Prostate gland (tissue), 2 donors: ENCODE measurements at regions of chr13 and their contacts with region 1.

Region 1: DNA sequence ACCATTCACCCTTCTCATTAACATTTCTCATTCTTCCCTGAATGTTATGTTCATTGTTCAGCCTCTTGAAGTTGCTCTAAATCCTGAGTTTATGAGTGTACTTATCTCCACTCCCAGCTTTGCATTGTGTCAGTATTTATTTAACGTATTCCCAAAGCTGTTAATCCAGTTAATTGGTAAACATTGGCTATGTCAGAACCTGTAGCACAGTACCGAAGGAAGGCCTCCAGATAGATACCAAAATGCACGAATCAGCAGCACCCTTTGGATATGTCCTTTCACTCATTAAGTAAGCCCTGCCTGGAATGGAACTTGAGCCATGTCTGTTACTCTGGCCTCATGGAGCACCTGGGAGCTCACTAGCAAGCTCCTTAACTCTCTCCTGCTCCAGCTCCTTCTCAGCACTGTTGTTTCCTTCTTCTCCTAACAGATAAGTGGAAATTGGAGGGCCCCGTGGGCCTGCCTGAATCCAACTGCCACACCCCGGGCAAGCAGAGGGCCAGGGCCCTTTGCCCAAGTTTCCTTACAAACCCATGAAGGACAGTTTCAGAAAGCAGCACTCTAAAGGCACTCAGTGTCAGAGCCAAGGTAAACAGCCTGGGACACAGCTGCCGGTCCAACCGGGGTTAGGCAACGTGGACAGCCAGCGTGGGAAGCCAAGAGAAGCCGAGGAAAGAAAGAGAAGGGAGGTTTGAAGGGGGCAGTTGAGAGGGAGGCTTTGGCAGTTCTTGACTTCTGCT is 155.0 kb upstream of the SERP2 start:
- DNase-seq: peak; percentile 96
- H3K4me3 ChIP-seq: no peak overlapping the region
- H3K27ac ChIP-seq: peak overlapping the region; percentile 78 to 81
- H3K4me1 ChIP-seq: peaks cover 30% of the 10 kb centered on the region
- H3K27me3 ChIP-seq: no peaks in the 10 kb centered on the region
- CTCF ChIP-seq: no peak
- POLR2A ChIP-seq: no peak

Region 2: GRCh38 chr13:44050450-44051063 is 168.1 kb before region 1 on chr13:
- intact Hi-C with region 1: loop called (anchors 5 kb)
- DNase-seq: no peak
- H3K4me3 ChIP-seq: no peak overlapping the region
- H3K27ac ChIP-seq: peak overlapping the region in 1 of 2 donors; percentile 15
- H3K4me1 ChIP-seq: no peaks in the 10 kb centered on the region
- H3K27me3 ChIP-seq: no peaks in the 10 kb centered on the region
- CTCF ChIP-seq: peak; percentile 50 to 86 (median 72)
- POLR2A ChIP-seq: no peak

Region 3: DNA sequence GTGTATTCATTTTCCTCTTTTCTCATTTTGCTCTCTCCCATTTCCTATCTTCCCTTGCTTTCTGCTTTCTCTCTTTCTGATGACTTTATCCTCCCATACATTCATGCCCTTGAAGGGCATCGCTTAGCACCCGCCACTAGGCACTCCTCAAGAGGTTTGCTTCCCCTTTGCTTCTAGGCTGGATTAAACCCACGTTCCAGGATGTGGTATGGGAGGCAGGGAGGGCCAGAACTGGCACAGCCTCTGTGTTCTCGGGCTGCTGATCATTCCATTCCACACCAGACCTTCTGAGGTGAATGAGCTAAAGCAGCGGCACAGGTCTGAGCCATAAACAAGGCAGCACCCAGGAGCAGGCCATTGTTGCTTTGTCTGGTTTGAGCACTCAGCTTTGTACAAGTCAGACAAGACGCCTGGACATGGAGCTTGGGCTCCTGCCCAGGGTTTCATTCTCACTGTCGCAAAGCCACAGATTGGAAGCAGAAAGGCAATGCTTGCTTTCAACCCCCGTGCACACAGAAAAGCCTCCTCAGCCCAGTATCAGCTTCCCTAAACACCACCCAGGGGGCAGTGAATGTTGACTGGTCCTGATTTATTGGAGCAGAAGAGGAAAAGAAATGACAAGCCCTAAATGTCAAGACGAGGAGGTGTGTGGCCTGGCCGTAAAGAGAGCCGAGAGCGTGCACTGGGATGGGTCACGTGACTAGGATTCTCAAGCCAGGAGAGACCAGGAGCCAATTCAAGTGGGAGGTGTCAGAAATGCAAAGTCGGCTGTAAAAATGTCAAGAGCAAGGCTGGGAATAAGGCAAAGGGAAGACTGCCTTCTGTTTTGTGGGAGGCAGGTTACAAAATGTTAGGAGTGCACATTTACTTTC is 63.0 kb before region 1 on chr13:
- intact Hi-C with region 1: loop called (anchors 5 kb)
- DNase-seq: peak; percentile 78
- H3K4me3 ChIP-seq: peak overlapping the region in 1 of 2 donors; percentile 19
- H3K27ac ChIP-seq: peak overlapping the region; percentile 59 to 68
- H3K4me1 ChIP-seq: peaks cover 6% of the 10 kb centered on the region
- H3K27me3 ChIP-seq: no peaks in the 10 kb centered on the region
- CTCF ChIP-seq: no peak
- POLR2A ChIP-seq: no peak

Region 4: DNA sequence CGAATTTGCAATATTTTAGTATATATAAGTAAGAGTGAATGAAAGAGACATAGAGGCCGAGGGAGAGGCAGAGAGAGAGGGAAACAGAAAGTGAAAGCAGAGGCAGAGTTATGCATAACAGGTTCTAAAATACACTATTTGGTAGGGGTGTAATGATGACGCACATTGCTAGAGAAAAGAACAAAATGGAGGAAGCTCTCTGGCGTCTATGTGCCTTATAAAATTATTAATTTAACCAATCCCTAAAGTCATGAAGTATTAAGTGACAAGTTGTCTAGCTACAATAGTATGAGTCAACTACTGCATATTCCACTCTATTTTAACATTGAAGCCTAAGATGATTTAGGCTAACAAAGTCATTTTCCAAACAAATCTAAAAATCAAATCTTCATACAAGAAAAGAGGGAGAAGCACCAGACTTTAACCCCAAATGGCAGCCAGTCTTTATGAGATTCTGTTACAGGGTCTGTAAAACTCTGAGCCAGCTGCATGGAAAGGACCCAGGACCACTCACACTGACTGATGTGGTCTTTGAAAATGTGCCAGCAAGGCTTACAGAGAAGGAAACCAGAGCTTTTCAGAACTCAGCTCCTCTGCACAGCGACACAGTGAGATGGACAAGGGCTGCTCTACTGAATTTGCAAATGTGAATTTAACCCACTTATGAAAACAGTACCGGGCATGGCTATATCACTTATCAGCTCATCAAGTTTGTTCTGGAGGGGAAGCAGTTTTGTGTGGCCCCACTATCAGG is 56.0 kb after region 1 on chr13:
- intact Hi-C with region 1: loop called (anchors 2 kb)
- DNase-seq: peak; percentile 66
- H3K4me3 ChIP-seq: no peak overlapping the region
- H3K27ac ChIP-seq: peak overlapping the region; percentile 85 to 87
- H3K4me1 ChIP-seq: peaks cover 13% of the 10 kb centered on the region
- H3K27me3 ChIP-seq: no peaks in the 10 kb centered on the region
- CTCF ChIP-seq: no peak
- POLR2A ChIP-seq: no peak

Region 5: DNA sequence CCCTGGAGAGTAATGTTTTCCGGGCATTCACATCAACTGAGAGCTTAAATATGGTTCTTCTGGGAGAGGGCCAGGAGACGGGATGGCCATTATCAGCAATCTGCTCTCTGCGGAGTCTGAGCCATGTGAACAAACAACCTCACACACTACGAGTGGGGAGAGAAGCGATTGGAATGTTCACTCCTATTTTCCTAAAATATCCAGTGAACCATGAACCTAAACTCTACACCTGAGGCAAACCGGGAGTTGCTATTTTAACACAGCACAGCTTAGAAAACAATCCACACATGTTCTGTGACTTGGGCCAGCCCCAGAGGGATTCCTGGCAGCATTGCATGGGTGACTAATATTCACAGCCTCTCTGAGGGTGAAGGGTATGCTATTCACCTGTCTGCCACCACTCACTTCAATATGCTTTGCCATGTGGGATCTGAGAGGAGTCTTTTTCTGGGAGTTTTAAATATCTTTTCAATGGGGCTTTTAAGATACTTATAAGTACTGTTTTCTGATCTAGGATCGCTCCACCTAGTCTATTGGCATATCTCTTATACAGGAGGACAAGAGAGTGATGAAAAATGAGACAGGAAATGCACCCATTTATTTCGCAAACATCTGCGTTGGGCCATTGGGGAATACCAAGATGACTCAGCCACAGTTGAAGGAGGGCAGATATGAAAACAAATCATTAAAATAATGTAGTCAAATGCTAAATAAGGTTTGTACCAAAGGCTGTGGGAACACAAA is 82.4 kb after region 1 on chr13:
- intact Hi-C with region 1: loop called (anchors 5 kb)
- DNase-seq: peak; percentile 73
- H3K4me3 ChIP-seq: no peak overlapping the region
- H3K27ac ChIP-seq: peak overlapping the region; percentile 42 to 59
- H3K4me1 ChIP-seq: peaks cover 9% of the 10 kb centered on the region
- H3K27me3 ChIP-seq: no peaks in the 10 kb centered on the region
- CTCF ChIP-seq: peak in 2 of 4 experiments; percentile 31 to 32
- POLR2A ChIP-seq: no peak